GM10248 (cell line): ENCODE measurements at regions of chr9 and their contacts with region 1.

Region 1: DNA sequence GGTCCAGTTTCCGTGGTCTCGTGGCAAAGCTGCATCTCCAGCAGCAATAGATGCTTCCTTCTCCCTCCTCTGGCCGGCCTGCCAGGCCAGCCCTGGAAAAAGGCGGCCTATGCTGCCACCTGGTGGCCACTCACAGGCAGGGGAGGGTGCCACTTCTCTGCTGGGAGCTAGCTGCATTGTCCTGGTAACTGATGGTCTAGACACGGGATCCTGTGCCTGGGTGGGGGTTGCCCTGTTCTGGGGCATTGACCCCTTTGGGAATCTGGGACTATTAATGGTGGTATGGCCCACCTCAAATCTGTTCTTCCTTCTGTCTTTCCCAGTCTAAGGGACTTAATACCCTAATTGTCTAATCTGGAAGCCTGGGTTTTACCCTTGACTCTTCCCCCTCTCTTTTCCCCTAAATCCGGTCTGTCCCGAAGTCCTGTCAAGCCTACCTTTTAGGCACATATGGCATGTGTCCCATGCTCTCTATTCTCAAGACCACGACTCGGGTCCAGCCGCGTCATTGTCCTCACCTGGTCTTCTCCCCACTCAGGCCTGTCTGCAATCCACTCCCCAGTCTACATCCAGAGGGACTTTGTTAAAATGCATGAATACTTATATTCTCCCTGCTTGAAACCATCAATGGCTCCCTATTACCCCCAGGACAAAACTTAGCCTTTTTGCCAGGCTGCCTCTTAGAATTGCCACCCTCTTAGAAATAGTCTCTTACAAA is 20.0 kb upstream of the PTGS1 start:
- DNase-seq: peak; percentile 86
- CTCF ChIP-seq: peak; percentile 99

Region 2: GRCh38 chr9:121852651-121853616 is 497.9 kb before region 1 on chr9:
- CTCF ChIA-PET with region 1: no interaction called
- POLR2A ChIA-PET with region 1: no interaction called
- DNase-seq: no peak
- CTCF ChIP-seq: no peak

Region 3: DNA sequence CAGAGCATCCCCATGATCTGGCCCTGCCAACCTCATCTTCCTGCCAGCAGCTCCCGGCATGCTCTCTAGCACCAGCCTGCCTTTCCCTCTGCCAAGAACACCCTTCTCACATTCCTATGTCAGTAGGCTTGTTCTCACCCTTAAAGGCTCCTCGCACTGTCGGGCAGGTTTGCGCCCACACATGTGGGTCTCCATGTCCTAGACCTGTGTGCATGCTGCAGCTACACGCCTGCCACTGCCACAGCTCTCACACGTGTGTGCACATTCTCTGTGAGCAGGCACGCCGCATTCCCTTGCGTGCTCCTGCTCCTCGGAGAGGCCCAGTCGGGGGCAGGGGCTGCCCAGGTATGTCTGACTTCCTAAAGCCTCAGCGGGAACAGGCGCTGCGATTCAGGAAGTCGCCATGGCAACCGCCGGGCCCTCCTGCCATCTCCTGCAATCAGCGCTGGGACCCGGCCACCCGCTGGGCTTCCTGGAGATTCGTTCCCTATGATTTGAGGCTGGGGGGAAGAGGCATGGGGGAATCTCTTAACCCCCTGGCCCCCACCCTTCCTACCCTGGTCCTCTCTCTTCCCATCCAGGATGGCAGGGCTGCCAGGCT is 219.3 kb before region 1 on chr9:
- CTCF ChIA-PET with region 1: interaction called, 243 read pairs
- POLR2A ChIA-PET with region 1: no interaction called
- DNase-seq: no peak
- CTCF ChIP-seq: no peak

Region 4: DNA sequence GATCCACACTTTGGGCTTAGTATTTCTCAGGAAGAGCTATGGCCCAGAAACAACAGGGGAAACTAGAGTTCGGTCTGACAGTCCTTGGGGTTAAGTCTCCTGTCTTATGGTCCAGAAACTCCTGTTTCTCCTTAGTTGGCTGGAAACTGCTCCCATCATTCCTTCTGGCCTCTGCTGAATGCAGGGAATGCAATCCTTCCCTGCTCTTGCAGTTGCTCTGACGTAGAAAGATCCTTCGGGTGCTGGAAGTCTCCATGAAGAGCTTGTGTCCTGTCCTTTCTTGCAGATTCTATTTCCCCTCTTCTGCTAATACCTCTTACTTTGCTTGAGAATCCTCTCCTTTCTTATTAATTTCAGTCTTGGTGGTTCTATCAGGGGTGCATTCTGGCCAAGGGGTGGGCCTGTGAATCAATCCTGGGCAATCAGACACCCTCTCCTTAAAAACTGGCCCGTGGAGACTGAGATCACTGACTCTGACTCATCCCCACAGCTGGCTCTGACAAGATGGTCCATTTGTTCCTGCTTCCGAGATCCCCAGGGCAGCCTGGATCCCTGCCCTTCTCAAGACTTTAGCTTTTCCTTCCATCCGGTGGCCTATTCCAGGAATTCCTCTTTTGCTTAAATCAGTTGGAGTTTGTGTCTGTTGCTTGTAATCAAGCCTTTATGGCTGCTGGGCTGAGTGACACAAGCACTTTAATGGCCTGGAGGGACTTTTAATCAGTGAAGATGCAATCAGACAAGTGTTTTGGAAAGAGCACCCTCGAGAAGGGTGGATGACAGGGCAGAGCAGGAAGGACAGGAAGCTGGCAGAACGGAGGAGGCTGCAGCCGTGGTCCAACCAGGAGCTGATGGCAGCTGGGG is 43.7 kb after region 1 on chr9:
- CTCF ChIA-PET with region 1: interaction called, 10 read pairs
- POLR2A ChIA-PET with region 1: no interaction called
- DNase-seq: no peak
- CTCF ChIP-seq: no peak